ENCODE measurements at regions of chr2 and their contacts with region 1.

Region 1: DNA sequence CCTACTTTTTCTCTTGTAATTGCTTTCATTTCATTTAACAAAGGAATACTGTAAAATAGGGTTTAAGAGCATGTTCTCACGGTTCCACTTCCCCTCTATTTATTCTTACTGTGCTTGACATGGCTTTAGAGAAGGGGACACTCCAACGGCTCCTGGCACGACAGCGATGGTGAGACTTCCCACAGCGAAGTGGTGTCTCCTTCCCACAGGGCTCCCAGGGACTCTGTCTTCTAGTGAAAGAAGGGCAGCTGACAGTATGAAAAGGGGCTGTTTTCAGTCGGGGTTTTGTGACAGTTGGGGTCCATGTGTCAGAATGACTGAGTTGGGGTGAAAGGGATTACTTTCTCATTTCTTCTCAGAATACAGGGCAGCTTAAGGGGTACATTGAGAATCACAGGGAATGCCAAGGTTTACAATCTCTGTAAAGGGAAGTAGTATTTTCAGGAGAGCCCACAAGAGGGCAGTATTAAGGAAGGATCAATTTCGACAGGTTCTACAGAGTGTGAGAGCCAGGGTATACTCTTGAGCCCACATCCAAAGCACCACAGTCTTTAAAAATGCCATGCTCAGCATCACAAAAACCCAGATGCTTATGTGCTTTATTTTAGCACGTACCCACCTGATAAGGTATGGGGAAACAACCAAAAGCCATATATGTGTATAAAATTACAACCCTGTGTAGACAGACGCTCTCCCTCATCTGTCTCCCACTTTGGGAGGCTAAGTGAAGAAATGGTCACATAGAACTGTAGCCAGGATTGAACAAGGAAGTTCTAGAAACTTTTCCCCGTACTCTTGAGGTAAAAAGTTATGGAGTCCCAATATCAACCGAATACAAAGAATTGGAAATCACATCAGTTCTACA is 31.3 kb upstream of the RAPGEF4 start:
- DNase-seq: peak; percentile 25
- H3K4me3 ChIP-seq: no peak overlapping the region
- H3K27ac ChIP-seq: no peak overlapping the region
- H3K4me1 ChIP-seq: peaks cover 14% of the 10 kb centered on the region
- H3K27me3 ChIP-seq: no peaks in the 10 kb centered on the region
- CTCF ChIP-seq: peak; percentile 51 to 62

Region 2: DNA sequence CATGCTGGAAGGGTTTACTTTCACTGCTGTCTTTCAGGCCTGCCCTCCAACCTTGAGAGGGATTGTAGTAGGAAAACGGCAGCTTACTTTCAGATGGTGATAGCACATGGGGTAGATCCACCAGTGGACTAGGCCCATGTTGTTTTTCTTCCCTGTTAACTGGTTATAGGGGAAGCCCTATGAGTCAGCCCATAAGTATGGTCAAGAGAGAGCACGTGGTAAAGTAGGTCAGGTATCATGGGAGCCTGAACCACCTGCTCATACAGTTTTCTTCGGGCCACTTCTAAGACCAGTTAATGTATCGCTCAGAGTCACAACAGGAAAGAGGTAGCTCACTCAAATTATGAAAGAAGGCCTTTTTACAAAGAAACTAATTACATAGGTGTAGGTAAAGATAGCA is 115.4 kb before region 1 on chr2:
- CTCF ChIA-PET with region 1: no interaction called
- dilution Hi-C with region 1: no loop called
- in situ Hi-C with region 1: no loop called
- intact Hi-C with region 1: loop called (anchors 1 kb)
- DNase-seq: peak; percentile 60
- H3K4me3 ChIP-seq: no peak overlapping the region
- H3K27ac ChIP-seq: no peak overlapping the region
- H3K4me1 ChIP-seq: no peaks in the 10 kb centered on the region
- H3K27me3 ChIP-seq: no peaks in the 10 kb centered on the region
- CTCF ChIP-seq: no peak

Measured in mammary epithelial cell (primary cell).